Caco-2 (cell line): ENCODE measurements at regions of chr4 and their contacts with region 1.

Region 1: DNA sequence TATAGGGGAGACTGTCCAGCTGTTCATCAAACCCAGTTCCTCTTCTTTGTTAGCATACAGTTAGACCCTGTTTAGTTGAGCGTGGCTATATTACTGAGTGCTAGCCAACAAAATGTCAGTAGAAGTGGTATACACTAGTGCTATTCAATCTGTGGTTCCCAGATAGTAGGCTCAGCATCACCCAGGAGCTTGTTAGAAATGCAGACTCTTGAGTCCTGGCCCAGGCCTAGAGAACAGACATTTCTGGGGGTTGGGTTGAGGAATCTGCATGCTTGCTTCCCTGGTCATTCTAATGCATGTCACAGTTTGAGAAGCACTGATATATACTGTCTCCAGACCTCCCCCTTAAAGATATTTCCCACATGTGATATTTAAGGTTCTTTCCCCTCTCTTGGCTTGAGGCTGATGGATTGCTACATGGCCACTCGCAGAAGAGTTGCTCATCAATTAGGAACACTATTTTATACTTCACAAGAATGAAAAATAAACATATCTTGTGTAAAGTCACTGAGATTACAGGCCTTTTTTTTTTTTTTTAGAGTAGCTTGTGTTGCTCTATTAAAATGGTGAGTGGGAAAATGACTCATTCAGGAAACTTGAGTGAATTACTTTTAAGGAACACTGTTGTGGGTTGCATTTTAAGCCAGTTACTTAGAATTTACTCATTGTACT is 289.0 kb downstream of the STIM2 start:
- DNase-seq: no peak
- H3K4me3 ChIP-seq: no peak overlapping the region
- H3K4me3 Mint-ChIP-seq: no peak overlapping the region
- H3K27ac Mint-ChIP-seq: no peak overlapping the region
- H3K4me1 ChIP-seq: no peaks in the 10 kb centered on the region
- H3K4me1 Mint-ChIP-seq: no peaks in the 10 kb centered on the region
- H3K27me3 ChIP-seq: no peaks in the 10 kb centered on the region
- H3K27me3 Mint-ChIP-seq: peaks cover 11% of the 10 kb centered on the region
- CTCF ChIP-seq: no peak

Region 2: DNA sequence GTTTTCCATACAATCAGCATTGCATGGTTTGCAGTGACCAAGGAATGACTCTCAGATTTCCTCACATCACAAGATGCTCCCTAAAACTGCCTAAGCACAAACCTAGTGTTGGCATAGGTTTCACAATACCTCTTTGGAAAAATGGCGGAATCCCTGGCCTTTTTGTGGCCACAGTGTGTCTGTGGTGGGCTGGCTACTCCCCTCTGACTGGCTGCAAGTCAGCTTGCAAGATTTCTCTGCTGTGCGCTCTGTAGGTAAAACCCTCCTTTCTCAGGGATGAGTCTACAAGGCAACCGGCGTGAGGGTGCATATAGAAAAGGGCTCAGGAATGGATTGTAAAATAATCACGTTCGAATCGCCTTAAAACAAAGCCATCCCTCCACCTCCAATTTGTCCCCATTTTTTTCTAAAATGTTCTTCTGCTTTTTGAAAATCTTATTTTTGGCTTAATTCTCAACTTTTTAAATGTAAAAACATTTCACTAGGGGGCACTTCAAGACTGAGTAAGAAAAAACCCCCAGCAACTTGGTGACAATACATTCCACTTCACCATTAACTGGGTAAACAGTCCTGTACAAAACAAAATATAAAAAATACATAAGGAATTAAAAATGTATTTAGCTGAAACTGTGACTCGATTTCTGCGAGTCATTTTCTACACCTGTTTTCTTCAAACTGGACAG is 53.4 kb before region 1 on chr4:
- CTCF ChIA-PET with region 1: no interaction called
- POLR2A ChIA-PET with region 1: no interaction called
- intact Hi-C with region 1: loop called (anchors 2 kb)
- DNase-seq: no peak
- H3K4me3 ChIP-seq: no peak overlapping the region
- H3K4me3 Mint-ChIP-seq: no peak overlapping the region
- H3K27ac Mint-ChIP-seq: no peak overlapping the region
- H3K4me1 ChIP-seq: no peaks in the 10 kb centered on the region
- H3K4me1 Mint-ChIP-seq: no peaks in the 10 kb centered on the region
- H3K27me3 ChIP-seq: no peaks in the 10 kb centered on the region
- H3K27me3 Mint-ChIP-seq: peaks cover 5% of the 10 kb centered on the region
- CTCF ChIP-seq: peak; percentile 16 to 19

Region 3: GRCh38 chr4:27115221-27115620 is 34.5 kb before region 1 on chr4:
- CTCF ChIA-PET with region 1: no interaction called
- POLR2A ChIA-PET with region 1: no interaction called
- intact Hi-C with region 1: no loop called
- DNase-seq: no peak
- H3K4me3 ChIP-seq: no peak overlapping the region
- H3K4me3 Mint-ChIP-seq: no peak overlapping the region
- H3K27ac Mint-ChIP-seq: no peak overlapping the region
- H3K4me1 ChIP-seq: no peaks in the 10 kb centered on the region
- H3K4me1 Mint-ChIP-seq: no peaks in the 10 kb centered on the region
- H3K27me3 ChIP-seq: no peaks in the 10 kb centered on the region
- H3K27me3 Mint-ChIP-seq: peaks cover 19% of the 10 kb centered on the region
- CTCF ChIP-seq: no peak